ENCODE measurements at regions of chr12 and their contacts with region 1.

Region 1: DNA sequence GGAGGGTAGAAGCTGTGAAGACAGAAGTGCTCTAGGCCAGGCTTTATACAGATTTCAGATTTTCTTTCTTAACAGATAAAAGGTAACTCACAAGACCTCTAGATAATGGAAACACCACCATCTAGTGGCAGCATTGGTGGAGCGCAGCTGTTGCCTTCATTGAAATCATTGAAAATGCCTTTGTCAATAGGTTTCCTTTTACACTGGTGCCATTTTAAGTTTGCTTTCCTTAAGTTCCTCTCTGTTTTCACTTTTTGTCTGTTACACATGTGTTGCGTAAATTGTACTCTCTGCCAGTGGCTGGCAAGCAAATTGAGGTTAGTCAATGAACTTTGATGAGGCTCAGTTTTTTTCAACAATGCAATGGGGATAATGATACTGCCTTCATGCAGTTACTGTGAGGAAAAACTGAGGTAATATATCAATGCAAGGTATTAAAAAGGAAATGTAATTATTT is 31.1 kb downstream of the ALDH1L2 start:
- DNase-seq: peak; percentile 87
- H3K4me3 ChIP-seq: no peak overlapping the region
- H3K27ac ChIP-seq: peak overlapping the region; percentile 14
- H3K4me1 ChIP-seq: peaks cover 24% of the 10 kb centered on the region
- CTCF ChIP-seq: peak; percentile 99

Region 2: DNA sequence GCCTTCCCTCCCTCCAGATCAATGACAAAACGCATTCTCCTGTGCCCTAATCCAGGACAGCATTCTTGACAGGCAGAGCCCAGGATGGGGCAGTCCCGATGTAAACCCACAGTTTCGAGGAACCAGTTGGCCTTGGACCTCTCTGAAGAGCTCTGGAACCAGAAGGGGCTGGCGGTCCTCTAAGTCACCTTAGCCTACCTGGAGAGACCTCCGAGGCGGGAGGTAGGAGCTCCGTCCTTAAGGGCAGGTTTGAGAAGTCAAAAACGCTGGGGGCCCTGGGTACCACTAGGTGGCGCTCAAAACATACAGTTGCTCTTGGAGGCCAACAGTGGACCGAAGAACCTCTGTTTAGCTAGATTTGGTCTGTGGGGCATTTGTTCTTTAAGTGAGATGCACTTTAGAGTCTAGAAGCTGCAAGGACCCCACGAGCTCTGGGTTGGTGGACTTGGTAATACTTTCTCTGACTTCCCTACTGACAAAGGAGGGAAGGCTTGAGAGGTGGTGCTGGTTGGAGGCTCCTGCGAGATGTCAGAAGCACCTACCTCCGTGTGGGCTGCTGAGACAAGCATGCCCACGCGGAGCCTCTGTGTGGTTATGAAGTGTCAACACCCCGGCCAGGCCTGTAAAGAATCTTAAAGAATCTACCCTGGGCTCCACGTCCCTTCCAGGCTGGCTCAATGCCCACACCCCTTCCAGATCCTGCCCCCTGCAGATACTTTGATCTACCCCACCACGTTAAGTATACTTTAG is 671.2 kb before region 1 on chr12:
- CTCF ChIA-PET with region 1: interaction called, 4 read pairs
- POLR2A ChIA-PET with region 1: no interaction called
- intact Hi-C with region 1: loop called (anchors 1 kb)
- DNase-seq: peak; percentile 87
- H3K4me3 ChIP-seq: no peak overlapping the region
- H3K27ac ChIP-seq: no peak overlapping the region
- H3K4me1 ChIP-seq: peaks cover 9% of the 10 kb centered on the region
- CTCF ChIP-seq: peak; percentile 98

Region 3: DNA sequence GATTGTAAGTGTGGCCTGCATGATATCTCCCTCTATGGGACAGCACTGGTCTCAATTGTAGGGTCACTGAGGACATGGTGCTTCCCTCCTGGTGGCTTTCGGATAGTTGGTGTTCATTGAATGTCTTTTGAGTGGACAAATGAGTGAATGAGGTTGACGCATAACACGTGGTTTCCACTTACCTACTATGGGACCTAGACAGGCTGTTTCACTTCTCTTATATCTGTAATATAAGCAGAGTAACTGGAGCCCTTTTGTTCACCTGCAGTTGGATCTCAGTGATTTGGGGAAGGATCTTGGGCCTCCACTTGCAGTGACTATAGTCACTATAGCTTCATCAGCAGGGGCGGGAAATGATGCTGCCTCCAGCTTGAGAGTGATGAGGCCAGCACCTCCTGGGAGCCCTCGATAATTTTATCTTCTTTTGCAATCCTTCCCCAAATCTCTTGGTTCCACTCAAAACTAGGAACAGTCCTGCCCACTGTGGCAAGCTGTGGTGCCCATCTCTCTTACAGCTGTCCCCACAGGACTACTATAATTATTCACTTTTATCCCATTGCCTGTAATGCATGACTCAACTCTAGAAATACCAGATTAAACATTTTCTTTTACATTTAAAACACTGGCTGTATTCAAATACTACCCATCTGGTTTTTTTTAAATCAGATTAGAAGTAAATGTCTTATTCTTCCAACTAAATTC is 353.5 kb before region 1 on chr12:
- CTCF ChIA-PET with region 1: no interaction called
- POLR2A ChIA-PET with region 1: no interaction called
- intact Hi-C with region 1: no loop called
- DNase-seq: peak; percentile 48
- H3K4me3 ChIP-seq: no peak overlapping the region
- H3K27ac ChIP-seq: no peak overlapping the region
- H3K4me1 ChIP-seq: peaks cover 19% of the 10 kb centered on the region
- CTCF ChIP-seq: no peak

Region 4: DNA sequence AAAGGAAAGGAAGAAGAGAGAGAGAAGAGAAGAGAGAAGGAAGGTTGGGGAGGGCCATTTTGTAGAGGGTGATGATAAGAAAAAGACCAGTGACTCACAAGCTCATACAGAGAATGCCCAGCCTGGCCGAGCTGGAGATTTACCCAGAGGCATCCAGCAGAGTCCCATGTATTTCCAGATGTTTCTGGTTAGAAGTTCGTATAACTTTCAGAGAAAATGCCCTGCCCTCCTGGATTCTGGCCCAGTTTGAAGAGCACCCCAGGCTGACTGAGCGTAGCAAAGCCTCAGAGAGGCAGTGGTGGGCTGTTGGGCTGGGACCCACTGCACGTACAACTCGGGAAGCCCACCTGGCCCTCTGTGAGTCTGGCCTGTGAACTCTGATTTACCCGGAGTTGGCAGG is 316.8 kb before region 1 on chr12:
- CTCF ChIA-PET with region 1: no interaction called
- POLR2A ChIA-PET with region 1: no interaction called
- intact Hi-C with region 1: loop called (anchors 5 kb)
- DNase-seq: no peak
- H3K4me3 ChIP-seq: no peak overlapping the region
- H3K27ac ChIP-seq: no peak overlapping the region
- H3K4me1 ChIP-seq: peaks cover 13% of the 10 kb centered on the region
- CTCF ChIP-seq: no peak

Region 5: GRCh38 chr12:104877123-104877705 is 175.9 kb before region 1 on chr12:
- CTCF ChIA-PET with region 1: no interaction called
- POLR2A ChIA-PET with region 1: no interaction called
- intact Hi-C with region 1: loop called (anchors 2 kb)
- DNase-seq: peak; percentile 44
- H3K4me3 ChIP-seq: no peak overlapping the region
- H3K27ac ChIP-seq: no peak overlapping the region
- H3K4me1 ChIP-seq: no peaks in the 10 kb centered on the region
- CTCF ChIP-seq: peak; percentile 89

Region 6: DNA sequence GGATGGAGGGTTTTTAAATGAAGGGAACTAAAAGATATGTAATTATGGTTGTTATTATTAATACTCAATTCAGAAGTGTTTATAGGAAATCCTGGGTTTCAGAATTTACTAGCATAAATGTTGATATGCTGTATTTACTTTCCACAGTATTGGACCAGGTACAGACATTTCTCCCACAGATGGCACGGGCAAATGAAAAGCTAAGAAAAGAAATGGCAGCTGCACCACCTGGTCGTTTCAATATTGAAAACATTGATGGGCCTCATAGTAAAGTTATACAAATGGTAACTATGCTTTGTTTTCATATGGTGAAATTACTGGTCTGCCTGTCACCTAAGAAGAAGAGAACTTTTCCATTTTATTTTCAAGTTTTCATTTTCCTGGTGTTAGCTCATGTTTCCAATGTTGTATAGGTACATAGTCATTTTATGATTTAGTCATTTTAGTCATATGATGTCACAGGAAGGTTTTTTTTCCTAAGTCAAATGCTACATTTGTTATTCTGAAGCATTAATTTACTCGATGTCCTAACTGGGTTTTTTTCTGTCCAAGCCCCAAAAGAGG is 61.5 kb before region 1 on chr12:
- CTCF ChIA-PET with region 1: no interaction called
- POLR2A ChIA-PET with region 1: no interaction called
- intact Hi-C with region 1: no loop called
- DNase-seq: no peak
- H3K4me3 ChIP-seq: no peak overlapping the region
- H3K27ac ChIP-seq: peak overlapping the region; percentile 25
- H3K4me1 ChIP-seq: peaks cover 34% of the 10 kb centered on the region
- CTCF ChIP-seq: no peak

Region 7: DNA sequence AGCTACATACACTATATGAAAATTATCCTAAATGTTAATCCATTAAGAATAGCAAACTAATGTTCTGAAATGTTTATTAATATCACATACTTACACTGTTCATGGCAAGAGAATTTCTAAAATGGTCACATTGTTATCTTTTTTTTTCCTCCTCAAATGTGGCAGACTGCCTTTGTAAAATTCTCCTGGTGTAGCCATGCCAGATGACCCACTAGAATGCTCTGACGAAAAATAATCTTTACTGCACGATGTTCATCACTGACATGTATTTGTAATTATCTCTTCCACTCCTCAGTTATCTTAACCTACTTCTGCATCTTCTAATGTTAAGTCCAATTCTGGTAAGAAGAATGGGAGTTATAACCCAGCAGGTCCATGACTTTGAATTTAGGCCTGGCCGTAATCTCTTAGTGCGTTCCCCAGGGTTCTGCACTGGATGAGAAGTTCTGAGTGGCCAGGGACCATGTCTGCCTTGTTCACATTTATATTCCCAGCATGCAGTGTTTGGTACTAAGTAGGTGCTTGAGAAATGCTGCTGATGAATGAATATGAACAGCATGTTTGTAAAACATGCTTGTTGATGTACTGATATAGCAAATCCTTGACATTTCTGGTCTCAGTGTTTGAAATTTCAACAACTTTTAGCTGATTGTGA is 20.3 kb before region 1 on chr12:
- CTCF ChIA-PET with region 1: no interaction called
- POLR2A ChIA-PET with region 1: no interaction called
- intact Hi-C with region 1: no loop called
- DNase-seq: no peak
- H3K4me3 ChIP-seq: no peak overlapping the region
- H3K27ac ChIP-seq: no peak overlapping the region
- H3K4me1 ChIP-seq: peaks cover 26% of the 10 kb centered on the region
- CTCF ChIP-seq: no peak